ENCODE measurements at regions of chr10 and their contacts with region 1.

Region 1: DNA sequence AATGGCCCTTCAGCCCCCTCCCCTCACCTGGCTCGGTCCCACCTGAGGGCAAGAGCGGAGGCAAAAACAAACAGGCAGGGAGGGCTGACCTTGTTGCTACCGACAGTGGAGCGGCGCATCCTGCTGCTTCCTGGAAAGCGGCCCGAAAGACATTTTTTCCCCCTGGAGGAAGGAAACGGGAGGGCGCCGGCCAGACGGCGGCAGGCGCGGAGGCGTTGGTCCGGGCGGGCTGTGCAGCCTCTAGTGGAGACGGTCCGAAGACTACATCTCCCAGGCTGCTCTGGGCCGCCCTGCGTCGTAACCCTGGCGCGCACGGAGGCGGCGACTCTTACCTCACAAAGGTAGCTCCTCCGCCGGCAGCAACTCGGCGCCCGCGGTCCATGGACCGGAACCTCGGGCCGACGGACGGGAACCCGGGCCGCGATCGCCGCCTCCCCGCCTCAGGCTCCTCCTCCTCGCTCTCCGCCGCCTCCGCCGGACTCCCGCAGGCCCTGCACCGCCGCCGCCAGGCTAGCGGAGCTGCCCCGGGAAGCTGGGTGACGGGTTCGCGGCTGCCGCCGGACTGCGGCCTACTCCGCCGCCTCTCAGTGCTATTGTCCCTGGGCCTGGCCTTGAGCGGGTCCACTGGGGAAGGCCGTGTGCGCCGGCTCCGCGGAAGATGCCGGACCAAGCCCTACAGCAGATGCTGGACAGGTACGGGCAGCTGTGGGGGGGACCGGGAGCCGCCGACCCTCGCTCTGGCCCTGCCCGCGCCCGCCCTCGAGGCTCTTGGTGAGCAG is at the starts of genes CPEB3 and MARCHF5:
- DNase-seq: peak; percentile 92
- H3K4me3 Mint-ChIP-seq: peak within 1 kb of the TSS; percentile 93
- H3K27ac Mint-ChIP-seq: peak within 1 kb of the TSS; percentile 86
- H3K4me1 Mint-ChIP-seq: peaks cover 27% of the 10 kb centered on the region
- H3K27me3 Mint-ChIP-seq: no peaks in the 10 kb centered on the region
- total RNA-seq, gene CPEB3: 2.5 and 2.7 TPM in 2 replicates
- total RNA-seq, gene MARCHF5: 22.5 and 23.9 TPM in 2 replicates

Region 2: DNA sequence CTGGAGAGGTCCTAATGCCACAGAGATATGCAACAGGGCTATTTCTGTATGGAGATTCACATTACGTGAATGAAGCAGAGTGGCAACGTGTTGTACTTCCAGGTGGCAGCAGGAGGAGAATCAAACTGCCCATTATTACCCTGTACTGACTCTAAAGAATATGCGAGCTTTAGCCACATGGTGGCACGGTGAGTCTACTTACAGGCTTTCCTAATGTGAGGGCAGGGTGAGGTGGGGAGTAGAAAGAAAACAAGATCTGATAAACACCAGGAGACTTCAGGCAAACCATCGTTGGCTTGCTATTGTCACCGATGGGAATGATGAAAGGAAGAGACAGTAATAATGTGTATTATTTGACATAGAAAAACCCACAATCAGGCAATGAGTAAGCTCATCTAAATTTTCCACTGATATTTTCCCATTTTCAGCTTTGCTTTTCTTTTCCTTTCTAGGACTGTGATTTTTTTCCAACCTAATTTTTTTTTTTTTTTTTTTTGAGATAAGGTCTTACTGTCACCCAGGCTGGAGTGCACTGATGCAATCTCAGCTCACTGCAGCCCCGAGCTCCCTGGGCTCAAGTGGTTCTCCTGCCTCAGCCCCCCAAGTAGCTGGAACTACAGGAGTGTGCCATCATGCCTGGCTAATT is 203.2 kb before region 1 on chr10:
- intact Hi-C with region 1: loop called (anchors 1 kb)
- DNase-seq: peak; percentile 43
- H3K4me3 Mint-ChIP-seq: no peak overlapping the region
- H3K27ac Mint-ChIP-seq: no peak overlapping the region
- H3K4me1 Mint-ChIP-seq: peaks cover 8% of the 10 kb centered on the region
- H3K27me3 Mint-ChIP-seq: no peaks in the 10 kb centered on the region

Region 3: GRCh38 chr10:92208736-92209327 is 82.2 kb before region 1 on chr10:
- intact Hi-C with region 1: loop called (anchors 2 kb)
- DNase-seq: no peak
- H3K4me3 Mint-ChIP-seq: no peak overlapping the region
- H3K27ac Mint-ChIP-seq: no peak overlapping the region
- H3K4me1 Mint-ChIP-seq: peaks cover 20% of the 10 kb centered on the region
- H3K27me3 Mint-ChIP-seq: no peaks in the 10 kb centered on the region

Region 4: GRCh38 chr10:92267343-92267742 is 23.7 kb before region 1 on chr10:
- intact Hi-C with region 1: loop called (anchors 1 kb)
- DNase-seq: no peak
- H3K4me3 Mint-ChIP-seq: no peak overlapping the region
- H3K27ac Mint-ChIP-seq: peak overlapping the region; percentile 16
- H3K4me1 Mint-ChIP-seq: peaks cover 28% of the 10 kb centered on the region
- H3K27me3 Mint-ChIP-seq: no peaks in the 10 kb centered on the region

Region 5: GRCh38 chr10:92848441-92849233 is 557.6 kb after region 1 on chr10 and contains the start of gene EXOC6:
- intact Hi-C with region 1: loop called (anchors 5 kb)
- DNase-seq: peak; percentile 78
- H3K4me3 Mint-ChIP-seq: peak within 1 kb of the TSS; percentile 88
- H3K27ac Mint-ChIP-seq: peak within 1 kb of the TSS; percentile 93
- H3K4me1 Mint-ChIP-seq: peaks cover 38% of the 10 kb centered on the region
- H3K27me3 Mint-ChIP-seq: peaks cover 2% of the 10 kb centered on the region
- total RNA-seq, gene EXOC6: 13.5 TPM in 2 replicates

Region 6: DNA sequence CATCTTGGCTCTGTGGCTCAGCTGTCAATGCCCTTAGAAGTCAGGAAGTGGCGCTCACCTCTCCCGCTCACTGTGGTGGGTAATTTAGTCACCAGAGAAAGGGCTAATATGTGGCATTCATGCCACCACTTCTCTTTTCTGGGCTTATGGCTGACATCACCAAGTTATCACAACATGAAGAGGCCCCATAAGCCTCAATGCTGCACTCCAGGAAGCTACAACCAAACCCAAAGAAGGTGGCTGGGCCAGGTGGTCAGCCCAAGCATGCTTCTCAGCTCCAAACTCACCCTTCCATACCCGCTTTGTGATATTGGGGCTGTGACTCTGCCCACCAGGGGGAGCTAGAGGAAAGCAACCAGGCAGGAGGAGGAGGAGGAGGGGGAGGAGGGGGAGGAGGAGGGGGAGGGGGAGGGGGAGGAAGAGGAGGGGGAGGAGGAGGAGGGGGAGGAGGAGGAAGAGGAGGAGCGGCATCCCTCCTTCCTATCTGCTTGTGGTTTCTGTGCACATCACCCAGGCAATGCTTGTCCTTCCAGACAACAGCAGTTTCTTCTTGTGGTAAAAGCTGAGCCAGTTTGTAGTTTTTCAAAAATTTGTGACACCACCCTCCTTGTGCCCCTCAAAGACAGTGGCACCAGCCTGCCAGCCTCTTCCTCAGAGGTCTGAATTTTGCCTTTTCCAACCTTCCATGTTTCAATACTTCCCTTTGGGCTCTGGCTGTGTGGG is 824.8 kb after region 1 on chr10:
- intact Hi-C with region 1: no loop called
- DNase-seq: peak; percentile 35
- H3K4me3 Mint-ChIP-seq: no peak overlapping the region
- H3K27ac Mint-ChIP-seq: no peak overlapping the region
- H3K4me1 Mint-ChIP-seq: no peaks in the 10 kb centered on the region
- H3K27me3 Mint-ChIP-seq: peaks cover 8% of the 10 kb centered on the region

Region 7: DNA sequence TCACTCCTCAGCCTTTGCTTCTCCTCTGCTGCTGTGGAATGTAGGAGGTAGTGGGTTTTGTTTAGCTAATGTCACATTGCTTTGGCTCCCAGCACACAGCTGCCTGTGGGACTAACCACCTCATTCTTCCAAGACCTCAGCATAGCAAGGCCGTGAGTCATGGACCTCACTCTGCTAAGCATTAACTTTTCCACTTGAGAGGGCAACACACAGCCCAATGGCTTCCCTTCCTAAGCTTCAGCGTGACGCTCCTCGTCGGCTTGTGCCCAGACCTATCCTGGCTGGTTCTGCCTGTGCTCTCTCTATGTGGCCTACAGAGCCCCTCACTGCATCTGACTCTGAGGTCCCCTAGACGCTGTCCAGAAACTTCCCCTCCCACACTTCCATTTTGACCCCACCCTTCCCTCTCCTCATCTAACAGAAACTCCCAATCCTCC is 1167.8 kb after region 1 on chr10:
- intact Hi-C with region 1: no loop called
- DNase-seq: no peak
- H3K4me3 Mint-ChIP-seq: no peak overlapping the region
- H3K27ac Mint-ChIP-seq: no peak overlapping the region
- H3K4me1 Mint-ChIP-seq: peaks cover 21% of the 10 kb centered on the region
- H3K27me3 Mint-ChIP-seq: no peaks in the 10 kb centered on the region

Region 8: DNA sequence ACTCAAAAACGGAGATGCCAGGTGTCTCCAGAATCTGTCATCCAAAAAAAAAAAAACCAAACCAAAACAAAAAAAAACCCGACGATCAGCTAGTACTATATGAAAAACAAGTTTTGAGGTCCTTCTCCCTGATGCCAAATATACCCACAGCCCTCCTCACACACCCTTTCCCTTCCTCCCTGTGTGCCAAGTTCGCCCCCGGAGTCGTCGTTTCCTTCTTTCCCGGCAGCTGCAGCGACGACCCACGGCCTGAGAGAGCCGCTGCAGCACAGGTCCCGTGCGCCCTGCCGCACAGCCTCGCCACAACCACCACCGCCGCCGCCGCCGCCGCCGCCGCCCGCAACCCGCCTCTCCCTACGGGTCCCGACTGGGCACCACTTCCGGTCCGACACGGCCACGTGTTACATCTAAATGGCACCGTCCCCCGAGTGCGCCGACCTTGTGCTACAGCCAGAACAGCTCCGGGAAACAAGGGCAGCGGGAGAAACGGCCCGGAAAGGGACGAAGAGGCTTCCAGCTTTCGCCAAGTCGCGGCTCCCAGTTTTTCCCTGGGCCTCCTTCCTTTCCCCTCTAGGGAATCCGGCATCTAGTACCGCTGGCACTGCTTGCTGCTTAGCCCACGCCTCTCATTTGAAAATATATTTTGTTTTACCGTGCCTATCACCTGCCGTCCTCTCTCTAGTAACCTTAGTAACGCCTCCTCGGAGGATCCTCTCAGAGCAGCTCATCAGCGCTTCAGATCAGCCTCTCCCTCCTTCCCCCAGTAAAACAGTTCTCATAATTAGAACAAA is 1411.4 kb after region 1 on chr10 and contains the start of gene FRA10AC1:
- intact Hi-C with region 1: loop called (anchors 2 kb)
- DNase-seq: peak; percentile 86
- H3K4me3 Mint-ChIP-seq: no peak within 1 kb of the TSS
- H3K27ac Mint-ChIP-seq: no peak within 1 kb of the TSS
- H3K4me1 Mint-ChIP-seq: peaks cover 19% of the 10 kb centered on the region
- H3K27me3 Mint-ChIP-seq: no peaks in the 10 kb centered on the region
- total RNA-seq, gene FRA10AC1: 25.9 and 28.2 TPM in 2 replicates

Measured in activated T-helper 1 cell treated with anti-CD3 and anti-CD28 coated beads, Interleukin-12 subunit alpha, Interleukin-12 subunit beta, Interleukin-2, Interleukin-4 antibody, amounts not matched to agents 30 ng/mL and 10 ng/mL and 1 ng/mL, durations not matched to agents 14 hours and 24 hours and 36 hours (primary cell).